PC-3 (cell line): ENCODE measurements at regions of chr12 and their contacts with region 1.

Region 1: DNA sequence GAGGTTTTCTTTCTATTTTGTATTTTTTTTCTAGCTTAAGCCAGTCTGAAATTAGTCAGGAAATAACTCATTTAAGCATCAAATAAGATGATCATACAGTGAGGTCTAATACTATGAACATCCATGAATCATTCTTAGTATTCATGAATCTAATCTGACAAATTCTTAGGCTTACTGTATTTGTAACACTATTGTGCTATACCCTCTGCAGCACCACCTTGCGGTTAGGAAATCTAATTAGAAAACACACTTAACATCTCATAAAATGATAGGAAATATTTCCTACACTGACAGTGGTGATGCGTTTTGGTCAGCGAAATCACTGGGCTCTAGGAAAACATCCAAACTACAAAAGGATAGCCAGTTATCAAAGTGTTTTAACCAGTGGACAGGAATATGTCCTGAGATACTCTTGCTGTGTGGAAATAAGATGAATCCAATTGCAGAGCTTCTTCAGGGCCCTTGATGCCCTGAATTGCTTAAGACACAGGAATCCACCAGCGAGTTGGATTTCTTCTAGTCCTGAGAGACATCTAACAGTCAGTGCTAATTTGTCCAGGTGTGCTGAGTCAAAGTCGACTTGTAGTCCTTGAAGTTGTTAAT is 109.3 kb upstream of the MYF6 start:
- DNase-seq: peak; percentile 72
- ATAC-seq: peak; percentile 90
- H3K4me3 ChIP-seq: no peak overlapping the region
- H3K27ac ChIP-seq: no peak overlapping the region; the same call in 1 of the 2 replicates
- H3K4me1 ChIP-seq: peaks cover 13% of the 10 kb centered on the region
- H3K27me3 ChIP-seq: no peaks in the 10 kb centered on the region
- CTCF ChIP-seq: peak; percentile 74

Region 2: DNA sequence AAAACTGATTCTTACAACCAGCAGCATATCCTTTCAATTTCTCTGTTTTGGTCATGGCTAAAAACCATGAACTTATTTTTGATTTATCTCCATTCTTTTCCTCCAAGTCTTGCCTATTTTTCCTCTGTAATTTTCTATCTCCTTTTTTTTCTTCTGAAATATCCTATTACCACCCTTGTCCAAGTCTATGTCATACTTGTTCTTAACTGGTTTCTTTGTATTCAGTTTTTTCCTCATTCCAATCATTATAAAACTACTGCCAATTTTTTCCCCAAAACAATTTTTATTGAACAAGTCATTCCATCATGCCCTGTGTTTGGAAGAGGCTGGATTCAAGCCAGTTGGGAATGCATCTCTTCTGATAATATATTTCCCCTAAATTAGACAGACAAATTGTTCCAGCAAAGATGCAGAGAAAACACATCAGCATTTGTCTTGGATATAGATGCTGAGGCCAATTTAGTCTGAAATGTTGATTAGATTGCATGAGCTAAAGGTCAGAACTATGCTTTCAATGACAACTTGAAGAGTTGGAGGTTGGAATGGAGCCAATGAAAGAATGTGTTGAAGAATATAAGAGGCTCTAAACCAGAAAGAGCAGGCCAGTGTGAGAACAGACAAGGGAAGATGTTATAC is 468.1 kb before region 1 on chr12:
- CTCF ChIA-PET with region 1: no interaction called
- POLR2A ChIA-PET with region 1: no interaction called
- intact Hi-C with region 1: no loop called
- DNase-seq: peak; percentile 9
- ATAC-seq: no peak
- H3K4me3 ChIP-seq: no peak overlapping the region
- H3K27ac ChIP-seq: no peak overlapping the region
- H3K4me1 ChIP-seq: no peaks in the 10 kb centered on the region
- H3K27me3 ChIP-seq: no peaks in the 10 kb centered on the region
- CTCF ChIP-seq: no peak

Region 3: DNA sequence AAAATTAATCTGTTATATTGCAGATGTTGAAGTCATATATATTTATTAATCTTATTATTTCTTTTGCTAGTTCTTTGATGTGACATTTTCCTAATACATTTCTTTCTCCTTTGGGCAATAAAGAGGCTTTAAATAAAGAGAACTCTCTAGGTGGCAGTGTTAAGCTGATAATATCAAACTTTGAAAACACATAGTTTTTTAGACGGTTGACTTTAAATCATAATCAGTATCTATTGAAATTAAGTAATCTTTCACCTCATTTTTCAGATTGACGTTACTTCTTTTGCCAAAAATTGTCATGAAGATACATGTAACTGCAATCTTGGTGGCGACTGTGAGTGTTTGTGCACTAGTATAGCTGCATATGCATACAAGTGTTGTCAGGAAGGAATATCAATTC is 284.9 kb before region 1 on chr12:
- CTCF ChIA-PET with region 1: no interaction called
- POLR2A ChIA-PET with region 1: no interaction called
- intact Hi-C with region 1: loop called (anchors 2 kb)
- DNase-seq: peak; percentile 49
- ATAC-seq: 0 out of 2 replicates have a peak, but pooled peaks have one; percentile 33
- H3K4me3 ChIP-seq: no peak overlapping the region
- H3K27ac ChIP-seq: no peak overlapping the region
- H3K4me1 ChIP-seq: no peaks in the 10 kb centered on the region
- H3K27me3 ChIP-seq: no peaks in the 10 kb centered on the region
- CTCF ChIP-seq: peak; percentile 55

Region 4: DNA sequence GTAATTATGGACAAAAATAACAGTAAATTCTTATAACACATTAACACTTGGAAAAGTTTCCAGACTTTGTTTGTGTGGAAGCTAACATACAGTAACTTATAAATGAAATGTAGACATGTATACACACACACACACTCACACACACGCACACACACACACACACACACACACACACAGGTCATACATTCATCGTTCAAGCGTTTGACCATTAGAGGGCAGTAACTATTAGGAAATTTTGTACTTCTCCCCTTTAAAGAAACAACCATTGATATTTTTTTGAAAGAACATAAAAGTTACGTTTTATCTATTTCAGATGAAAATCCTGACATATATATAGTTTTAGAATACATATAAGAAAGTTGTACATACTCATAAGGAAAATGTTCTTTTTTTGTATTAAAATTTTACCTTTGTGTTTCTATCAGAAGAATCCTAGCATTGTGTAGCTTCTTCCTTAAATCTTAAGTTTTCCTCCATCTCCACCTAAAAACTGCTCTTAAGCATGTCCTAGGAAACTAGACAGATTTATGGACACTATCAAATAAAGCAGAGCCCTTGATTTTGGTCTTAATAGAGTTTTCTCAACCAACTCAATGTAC is 125.1 kb before region 1 on chr12:
- CTCF ChIA-PET with region 1: no interaction called
- POLR2A ChIA-PET with region 1: no interaction called
- intact Hi-C with region 1: loop called (anchors 1 kb)
- DNase-seq: peak; percentile 67
- ATAC-seq: peak; percentile 67
- H3K4me3 ChIP-seq: no peak overlapping the region
- H3K27ac ChIP-seq: no peak overlapping the region
- H3K4me1 ChIP-seq: no peaks in the 10 kb centered on the region
- H3K27me3 ChIP-seq: no peaks in the 10 kb centered on the region
- CTCF ChIP-seq: peak; percentile 81

Region 5: GRCh38 chr12:80551897-80552296 is 46.2 kb before region 1 on chr12:
- CTCF ChIA-PET with region 1: no interaction called
- POLR2A ChIA-PET with region 1: no interaction called
- intact Hi-C with region 1: loop called (anchors 2 kb)
- DNase-seq: peak; percentile 98
- ATAC-seq: peak; percentile 77
- H3K4me3 ChIP-seq: no peak overlapping the region
- H3K27ac ChIP-seq: peak overlapping the region; percentile 50
- H3K4me1 ChIP-seq: peaks cover 31% of the 10 kb centered on the region
- H3K27me3 ChIP-seq: no peaks in the 10 kb centered on the region
- CTCF ChIP-seq: no peak

Region 6: GRCh38 chr12:80565271-80565670 is 32.8 kb before region 1 on chr12:
- CTCF ChIA-PET with region 1: no interaction called
- POLR2A ChIA-PET with region 1: no interaction called
- intact Hi-C with region 1: no loop called
- DNase-seq: no peak
- ATAC-seq: no peak
- H3K4me3 ChIP-seq: no peak overlapping the region
- H3K27ac ChIP-seq: no peak overlapping the region
- H3K4me1 ChIP-seq: no peaks in the 10 kb centered on the region
- H3K27me3 ChIP-seq: no peaks in the 10 kb centered on the region
- CTCF ChIP-seq: no peak

Region 7: DNA sequence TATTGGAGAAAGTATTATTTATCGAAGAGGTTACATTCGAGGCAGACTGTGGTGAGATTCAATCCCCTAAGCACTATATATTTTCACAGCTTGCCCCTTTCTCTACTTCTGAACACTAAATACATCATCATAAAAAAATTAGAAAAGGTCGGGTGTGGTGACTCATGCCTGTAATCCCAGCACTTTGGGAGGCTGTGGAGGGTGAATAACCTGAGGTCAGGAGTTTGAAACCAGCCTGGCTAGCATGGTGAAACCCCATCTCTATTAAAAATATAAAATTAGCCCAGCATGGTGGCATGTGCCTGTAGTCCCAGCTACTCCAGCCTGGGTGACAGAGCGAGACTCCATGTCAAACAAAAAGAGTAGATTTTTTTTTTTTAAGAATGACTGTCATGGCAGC is 38.7 kb after region 1 on chr12:
- CTCF ChIA-PET with region 1: no interaction called
- POLR2A ChIA-PET with region 1: no interaction called
- intact Hi-C with region 1: no loop called
- DNase-seq: no peak
- ATAC-seq: no peak
- H3K4me3 ChIP-seq: no peak overlapping the region
- H3K27ac ChIP-seq: no peak overlapping the region
- H3K4me1 ChIP-seq: peaks cover 4% of the 10 kb centered on the region; the same call in 1 of the 2 replicates
- H3K27me3 ChIP-seq: peaks cover 10% of the 10 kb centered on the region; the same call in 1 of the 2 replicates
- CTCF ChIP-seq: no peak

Region 8: DNA sequence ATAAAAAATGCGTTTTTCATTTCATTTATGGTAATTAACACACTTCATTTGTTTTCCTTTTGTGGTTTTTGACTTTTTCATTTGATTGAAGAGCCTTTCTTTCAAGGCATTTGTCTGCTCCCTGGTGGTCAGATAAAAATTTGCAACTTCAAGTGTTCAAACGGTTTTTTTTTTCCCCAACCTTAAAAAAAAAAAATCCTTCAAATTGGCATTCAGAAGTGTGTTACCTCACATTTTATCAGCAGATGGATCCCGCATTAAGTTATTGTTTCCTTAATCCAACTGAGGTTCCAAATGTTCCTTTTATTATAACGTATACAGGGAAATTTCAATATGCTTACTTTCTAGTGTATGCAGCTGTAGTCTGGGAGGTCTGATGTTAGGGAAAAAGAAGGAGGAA is 165.8 kb after region 1 on chr12:
- CTCF ChIA-PET with region 1: no interaction called
- POLR2A ChIA-PET with region 1: no interaction called
- intact Hi-C with region 1: loop called (anchors 1 kb)
- DNase-seq: peak; percentile 60
- ATAC-seq: no peak
- H3K4me3 ChIP-seq: no peak overlapping the region
- H3K27ac ChIP-seq: no peak overlapping the region
- H3K4me1 ChIP-seq: no peaks in the 10 kb centered on the region
- H3K27me3 ChIP-seq: peaks cover 28% of the 10 kb centered on the region
- CTCF ChIP-seq: peak; percentile 78